Heart right ventricle (tissue), 16 donors: ENCODE measurements at regions of chr20 and their contacts with region 1.

Region 1: GRCh38 chr20:12243327-12243726 is 325.6 kb downstream of the BTBD3 start:
- DNase-seq: no peak
- ATAC-seq: no peak
- H3K4me3 ChIP-seq: no peak overlapping the region
- H3K27ac ChIP-seq: no peak overlapping the region
- H3K4me1 ChIP-seq: no peaks in the 10 kb centered on the region
- H3K27me3 ChIP-seq: no peaks in the 10 kb centered on the region
- CTCF ChIP-seq: no peak

Region 2: GRCh38 chr20:12180107-12180661 is 63.1 kb before region 1 on chr20:
- intact Hi-C with region 1: loop called in 1 of 10 experiments (anchors 10 kb)
- DNase-seq: peak in 1 of 2 donors; percentile 11
- ATAC-seq: peak in 4 of 8 donors; percentile 62 to 72 (median 68)
- H3K4me3 ChIP-seq: no peak overlapping the region
- H3K27ac ChIP-seq: peak overlapping the region in 2 of 10 donors; percentile 17 to 28
- H3K4me1 ChIP-seq: peaks cover 0 to 17% (median 0%) of the 10 kb centered on the region in 9 donors
- H3K27me3 ChIP-seq: no peaks in the 10 kb centered on the region
- CTCF ChIP-seq: no peak

Region 3: DNA sequence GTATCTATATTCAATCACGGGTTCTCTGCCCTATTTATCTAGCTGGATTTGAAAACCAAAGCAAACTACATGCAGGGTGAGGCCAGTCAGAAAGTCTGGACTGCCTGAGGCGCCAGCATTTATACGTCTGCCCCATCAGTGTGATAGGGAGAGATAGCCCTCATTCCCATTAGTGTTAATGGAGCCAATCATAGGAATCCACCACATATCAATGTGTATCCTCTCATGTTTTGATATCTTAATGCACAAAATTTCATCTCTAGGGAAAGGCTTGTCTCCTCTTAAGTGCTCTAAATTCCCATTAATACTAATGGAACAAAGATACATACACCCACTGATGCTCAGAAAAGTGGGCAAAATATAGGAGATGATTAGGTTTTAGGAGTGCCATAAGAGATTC is 50.6 kb after region 1 on chr20:
- intact Hi-C with region 1: loop called in 1 of 10 experiments (anchors 5 kb)
- DNase-seq: no peak
- ATAC-seq: no peak
- H3K4me3 ChIP-seq: no peak overlapping the region
- H3K27ac ChIP-seq: no peak overlapping the region
- H3K4me1 ChIP-seq: no peaks in the 10 kb centered on the region
- H3K27me3 ChIP-seq: no peaks in the 10 kb centered on the region
- CTCF ChIP-seq: no peak

Region 4: GRCh38 chr20:12318043-12318442 is 74.7 kb after region 1 on chr20:
- intact Hi-C with region 1: no loop called
- DNase-seq: no peak
- ATAC-seq: no peak
- H3K4me3 ChIP-seq: no peak overlapping the region
- H3K27ac ChIP-seq: no peak overlapping the region
- H3K4me1 ChIP-seq: no peaks in the 10 kb centered on the region
- H3K27me3 ChIP-seq: no peaks in the 10 kb centered on the region
- CTCF ChIP-seq: no peak